ENCODE measurements at regions of chr17 and their contacts with region 1.

Region 1: GRCh38 chr17:82436601-82437324 is 13.8 kb downstream of the CYBC1 start:
- DNase-seq: no peak
- H3K4me3 Mint-ChIP-seq: no peak overlapping the region
- H3K27ac Mint-ChIP-seq: no peak overlapping the region
- H3K4me1 Mint-ChIP-seq: peaks cover 10% of the 10 kb centered on the region
- H3K27me3 Mint-ChIP-seq: no peaks in the 10 kb centered on the region

Region 2: GRCh38 chr17:82450170-82451106 is 13.7 kb after region 1 on chr17 and contains the start of gene CYBC1:
- CTCF ChIA-PET with region 1: interaction called, 3 read pairs
- POLR2A ChIA-PET with region 1: interaction called, 13 read pairs
- intact Hi-C with region 1: no loop called
- DNase-seq: peak; percentile 97
- H3K4me3 Mint-ChIP-seq: peak within 1 kb of the TSS; percentile 85
- H3K27ac Mint-ChIP-seq: peak within 1 kb of the TSS; percentile 99
- H3K4me1 Mint-ChIP-seq: peaks cover 46% of the 10 kb centered on the region
- H3K27me3 Mint-ChIP-seq: no peaks in the 10 kb centered on the region
- total RNA-seq, gene CYBC1: 333 to 343 TPM

Region 3: DNA sequence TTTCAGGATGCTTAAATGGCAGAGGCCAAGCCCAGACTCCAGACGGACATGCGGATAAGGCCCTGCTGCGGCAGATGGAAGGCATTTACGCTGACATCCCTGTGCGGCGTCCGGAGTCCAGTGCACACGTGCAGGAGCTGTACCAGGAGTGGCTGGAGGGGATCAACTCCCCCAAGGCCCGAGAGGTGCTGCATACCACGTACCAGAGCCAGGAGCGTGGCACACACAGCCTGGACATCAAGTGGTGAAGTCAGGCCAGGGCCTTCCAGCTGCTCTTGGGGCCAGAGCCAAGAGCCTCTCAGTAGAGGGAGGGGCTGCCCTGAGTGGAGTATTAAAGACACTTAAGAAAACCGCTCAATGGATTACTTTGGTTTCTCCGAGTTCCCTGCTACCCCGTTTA is 51.1 kb after region 1 on chr17:
- CTCF ChIA-PET with region 1: no interaction called
- POLR2A ChIA-PET with region 1: no interaction called
- intact Hi-C with region 1: no loop called
- DNase-seq: no peak
- H3K4me3 Mint-ChIP-seq: no peak overlapping the region
- H3K27ac Mint-ChIP-seq: no peak overlapping the region
- H3K4me1 Mint-ChIP-seq: peaks cover 12% of the 10 kb centered on the region
- H3K27me3 Mint-ChIP-seq: no peaks in the 10 kb centered on the region